ENCODE measurements at regions of chr15 and their contacts with region 1.

Region 1: GRCh38 chr15:93382200-93382820 is 293.3 kb upstream of the RGMA start:
- DNase-seq: no peak
- H3K4me3 ChIP-seq: no peak overlapping the region
- H3K4me3 Mint-ChIP-seq: no peak overlapping the region
- H3K27ac Mint-ChIP-seq: no peak overlapping the region
- H3K4me1 ChIP-seq: no peaks in the 10 kb centered on the region
- H3K4me1 Mint-ChIP-seq: no peaks in the 10 kb centered on the region
- H3K27me3 ChIP-seq: no peaks in the 10 kb centered on the region
- H3K27me3 Mint-ChIP-seq: no peaks in the 10 kb centered on the region
- CTCF ChIP-seq: no peak

Region 2: DNA sequence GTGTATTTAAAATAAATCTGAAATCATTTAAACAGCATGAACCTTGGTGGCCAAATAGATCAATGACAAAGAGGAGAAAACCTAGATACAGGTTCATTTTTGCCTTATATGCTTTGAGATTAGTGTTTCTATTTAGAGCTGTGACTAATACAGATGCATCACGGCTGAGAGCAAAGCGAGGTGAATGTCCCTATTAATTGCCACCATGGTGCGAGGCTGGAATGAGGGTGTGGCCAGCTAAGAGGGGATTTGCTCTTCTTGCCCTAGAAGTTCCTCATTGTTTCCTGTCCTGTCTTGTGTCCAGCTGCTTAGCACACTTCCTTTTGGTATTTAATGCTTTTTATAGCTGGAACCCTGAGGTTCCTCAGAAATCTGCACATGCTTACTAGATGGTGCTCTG is 45.8 kb after region 1 on chr15:
- CTCF ChIA-PET with region 1: no interaction called
- POLR2A ChIA-PET with region 1: interaction called, 15 read pairs
- intact Hi-C with region 1: no loop called
- DNase-seq: no peak
- H3K4me3 ChIP-seq: no peak overlapping the region
- H3K4me3 Mint-ChIP-seq: no peak overlapping the region
- H3K27ac Mint-ChIP-seq: no peak overlapping the region
- H3K4me1 ChIP-seq: no peaks in the 10 kb centered on the region
- H3K4me1 Mint-ChIP-seq: no peaks in the 10 kb centered on the region
- H3K27me3 ChIP-seq: no peaks in the 10 kb centered on the region
- H3K27me3 Mint-ChIP-seq: peaks cover 5% of the 10 kb centered on the region
- CTCF ChIP-seq: no peak